ENCODE measurements at regions of chr18 and their contacts with region 1.

Region 1: GRCh38 chr18:3983351-3983969 is 471.6 kb downstream of the DLGAP1 start:
- DNase-seq: peak; percentile 91
- ATAC-seq: peak; percentile 45
- H3K4me3 ChIP-seq: no peak overlapping the region
- H3K27ac ChIP-seq: no peak overlapping the region
- H3K4me1 ChIP-seq: peaks cover 13% of the 10 kb centered on the region
- H3K27me3 ChIP-seq: no peaks in the 10 kb centered on the region
- CTCF ChIP-seq: no peak
- POLR2A ChIP-seq: no peak
- RAD21 ChIP-seq: no peak

Region 2: DNA sequence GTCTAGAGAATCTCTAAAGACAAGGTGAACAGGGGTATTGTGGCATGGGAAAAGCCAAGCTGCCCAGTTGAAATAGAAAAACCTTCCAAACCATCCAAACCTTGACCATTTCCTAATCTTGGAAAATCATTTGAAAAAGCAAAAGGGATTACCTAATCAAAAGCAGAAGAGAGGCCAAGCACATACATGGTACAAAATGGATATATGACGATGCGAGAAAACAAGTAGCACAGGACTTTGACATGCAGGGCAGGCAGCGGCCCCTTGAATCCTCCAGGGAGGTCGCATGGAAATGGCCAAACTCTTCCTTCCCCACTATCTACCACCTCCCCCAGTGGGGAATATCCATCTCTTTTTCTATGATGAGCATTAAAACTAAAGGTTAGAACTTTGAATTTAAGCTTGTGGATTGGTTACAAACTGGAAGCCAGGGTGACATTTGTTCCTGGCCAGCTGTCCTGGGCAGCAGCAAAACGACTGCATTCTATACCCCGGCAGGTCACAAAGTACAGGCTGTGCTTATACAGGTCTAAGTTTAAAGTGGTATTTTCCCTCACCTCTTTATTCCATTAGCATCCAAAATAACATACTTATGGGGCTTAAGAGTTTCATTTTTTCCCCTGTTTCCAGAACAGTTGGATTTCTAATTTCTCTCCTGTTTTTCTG is 788.4 kb before region 1 on chr18:
- CTCF ChIA-PET with region 1: no interaction called
- POLR2A ChIA-PET with region 1: no interaction called
- dilution Hi-C with region 1: no loop called
- in situ Hi-C with region 1: no loop called
- intact Hi-C with region 1: no loop called
- DNase-seq: no peak
- ATAC-seq: no peak
- H3K4me3 ChIP-seq: no peak overlapping the region
- H3K27ac ChIP-seq: no peak overlapping the region
- H3K4me1 ChIP-seq: no peaks in the 10 kb centered on the region
- H3K27me3 ChIP-seq: peaks cover 10% of the 10 kb centered on the region
- CTCF ChIP-seq: no peak
- POLR2A ChIP-seq: no peak
- RAD21 ChIP-seq: no peak

Region 3: GRCh38 chr18:3526421-3527354 is 456.8 kb before region 1 on chr18:
- CTCF ChIA-PET with region 1: no interaction called
- POLR2A ChIA-PET with region 1: no interaction called
- dilution Hi-C with region 1: no loop called
- in situ Hi-C with region 1: no loop called
- intact Hi-C with region 1: no loop called
- DNase-seq: peak; percentile 85
- ATAC-seq: peak; percentile 89
- H3K4me3 ChIP-seq: no peak overlapping the region
- H3K27ac ChIP-seq: no peak overlapping the region
- H3K4me1 ChIP-seq: peaks cover 2% of the 10 kb centered on the region; the same call in 1 of the 2 replicates
- H3K27me3 ChIP-seq: no peaks in the 10 kb centered on the region
- CTCF ChIP-seq: no peak
- POLR2A ChIP-seq: no peak
- RAD21 ChIP-seq: no peak

Region 4: GRCh38 chr18:3816610-3817363 is 166.7 kb before region 1 on chr18:
- CTCF ChIA-PET with region 1: no interaction called
- POLR2A ChIA-PET with region 1: no interaction called
- dilution Hi-C with region 1: no loop called
- in situ Hi-C with region 1: no loop called
- intact Hi-C with region 1: no loop called
- DNase-seq: peak; percentile 99
- ATAC-seq: peak; percentile 87
- H3K4me3 ChIP-seq: no peak overlapping the region
- H3K27ac ChIP-seq: peak overlapping the region; percentile 92
- H3K4me1 ChIP-seq: peaks cover 15% of the 10 kb centered on the region
- H3K27me3 ChIP-seq: no peaks in the 10 kb centered on the region
- CTCF ChIP-seq: no peak
- POLR2A ChIP-seq: no peak
- RAD21 ChIP-seq: no peak

Region 5: DNA sequence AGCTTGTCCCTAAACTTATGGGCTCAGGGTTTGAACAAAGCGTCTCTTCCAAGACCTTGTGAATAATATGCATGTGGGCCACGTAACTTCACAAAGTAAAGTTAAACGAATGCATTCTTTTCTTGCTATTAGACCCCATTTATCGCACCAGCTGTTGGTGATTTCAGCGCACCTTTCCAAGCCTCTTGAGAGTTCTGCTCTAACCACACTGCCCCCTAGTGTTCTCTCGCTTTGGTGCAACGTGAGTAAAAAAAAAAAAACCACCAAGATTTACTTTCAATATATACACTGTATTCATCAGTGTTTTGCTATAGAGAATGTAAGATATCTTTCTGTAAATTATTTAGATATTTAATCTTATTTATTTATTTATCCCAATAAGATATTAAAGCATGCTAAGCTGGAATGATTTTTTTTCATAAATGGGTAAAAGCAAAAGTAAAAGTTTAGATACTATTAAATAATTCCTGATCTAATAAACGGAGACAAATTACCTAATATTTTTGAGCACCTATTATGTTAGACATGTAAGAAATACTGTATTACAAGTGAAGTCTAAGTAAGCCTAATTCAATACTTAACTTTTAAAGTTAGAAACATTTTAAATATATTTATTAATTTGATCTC is 12.1 kb after region 1 on chr18:
- CTCF ChIA-PET with region 1: interaction called, 16 read pairs
- POLR2A ChIA-PET with region 1: no interaction called
- dilution Hi-C with region 1: no loop called
- in situ Hi-C with region 1: no loop called
- intact Hi-C with region 1: no loop called
- DNase-seq: peak; percentile 82
- ATAC-seq: peak; percentile 72
- H3K4me3 ChIP-seq: no peak overlapping the region
- H3K27ac ChIP-seq: no peak overlapping the region
- H3K4me1 ChIP-seq: no peaks in the 10 kb centered on the region
- H3K27me3 ChIP-seq: no peaks in the 10 kb centered on the region
- CTCF ChIP-seq: peak; percentile 80
- POLR2A ChIP-seq: no peak
- RAD21 ChIP-seq: peak; percentile 76